Colonic mucosa (tissue), 4 donors: ENCODE measurements at regions of chr5 and their contacts with region 1.

Region 1: GRCh38 chr5:128674825-128675446 is 136.9 kb upstream of the FBN2 start:
- DNase-seq: peak; percentile 53
- H3K4me3 ChIP-seq: no peak overlapping the region
- H3K27ac ChIP-seq: no peak overlapping the region
- H3K4me1 ChIP-seq: no peaks in the 10 kb centered on the region
- H3K27me3 ChIP-seq: no peaks in the 10 kb centered on the region
- CTCF ChIP-seq: peak; percentile 45

Region 2: DNA sequence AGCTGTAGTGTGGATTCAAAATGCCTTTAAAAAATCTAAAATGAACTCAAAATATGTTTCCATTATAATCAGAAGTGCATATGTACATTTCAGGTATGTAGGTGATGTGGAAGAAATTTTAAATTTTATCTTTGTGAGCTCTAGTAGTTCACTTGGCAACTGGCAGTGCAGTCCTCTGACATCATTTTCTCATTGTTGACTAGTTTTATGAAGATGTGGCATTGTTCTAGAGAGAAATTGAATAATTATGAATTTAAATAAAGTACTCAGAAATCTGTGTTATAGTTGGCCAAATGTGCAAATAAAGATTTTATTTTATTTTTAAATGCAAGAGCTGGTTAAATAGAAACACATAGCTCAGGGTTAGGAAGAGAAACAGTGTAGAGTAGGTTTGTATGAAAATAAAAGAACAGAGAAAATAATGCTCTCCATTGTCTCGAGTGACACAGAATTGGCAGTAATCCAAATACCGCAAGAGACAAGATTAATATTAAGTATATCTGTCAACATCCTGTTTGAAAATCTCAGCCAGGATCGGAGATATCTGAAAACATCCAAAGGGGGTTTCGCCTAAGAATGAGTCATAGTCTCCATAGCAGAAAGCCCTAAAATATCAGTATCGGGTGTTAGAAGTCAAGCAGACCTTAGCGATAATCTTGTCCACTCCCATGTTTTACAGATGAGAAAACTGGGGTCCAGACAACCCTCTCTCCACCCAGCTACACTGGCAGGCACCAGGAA is 782.3 kb before region 1 on chr5:
- intact Hi-C with region 1: loop called (anchors 10 kb)
- DNase-seq: no peak
- H3K4me3 ChIP-seq: no peak overlapping the region
- H3K27ac ChIP-seq: no peak overlapping the region
- H3K4me1 ChIP-seq: no peaks in the 10 kb centered on the region
- H3K27me3 ChIP-seq: no peaks in the 10 kb centered on the region
- CTCF ChIP-seq: no peak